ENCODE measurements at regions of chr1 and their contacts with region 1.

Region 1: DNA sequence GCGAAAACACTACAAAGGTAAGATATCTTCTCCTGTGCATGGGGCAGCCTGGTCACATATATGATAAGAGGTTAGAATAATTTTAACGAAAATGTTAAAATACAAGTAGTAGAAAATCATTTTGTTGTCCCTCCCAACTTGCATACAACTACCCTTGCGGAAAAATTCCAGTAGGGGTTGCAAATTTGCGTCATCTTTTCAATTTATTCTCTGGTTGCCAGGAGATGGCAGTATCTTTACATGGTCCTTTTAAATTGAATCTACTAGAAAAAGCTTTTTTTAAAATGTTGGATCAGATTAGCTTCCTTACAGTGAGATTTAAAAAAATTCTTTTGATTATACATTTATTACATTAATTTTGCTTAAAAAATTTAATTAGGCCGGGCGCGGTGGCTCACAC is 10.9 kb downstream of the S100PBP start:
- DNase-seq: peak; percentile 37
- H3K4me3 ChIP-seq: no peak overlapping the region
- H3K27ac ChIP-seq: no peak overlapping the region
- H3K4me1 ChIP-seq: no peaks in the 10 kb centered on the region
- H3K27me3 ChIP-seq: no peaks in the 10 kb centered on the region
- CTCF ChIP-seq: peak; percentile 52
- EP300 ChIP-seq: no peak
- RAD21 ChIP-seq: peak; percentile 57

Region 2: DNA sequence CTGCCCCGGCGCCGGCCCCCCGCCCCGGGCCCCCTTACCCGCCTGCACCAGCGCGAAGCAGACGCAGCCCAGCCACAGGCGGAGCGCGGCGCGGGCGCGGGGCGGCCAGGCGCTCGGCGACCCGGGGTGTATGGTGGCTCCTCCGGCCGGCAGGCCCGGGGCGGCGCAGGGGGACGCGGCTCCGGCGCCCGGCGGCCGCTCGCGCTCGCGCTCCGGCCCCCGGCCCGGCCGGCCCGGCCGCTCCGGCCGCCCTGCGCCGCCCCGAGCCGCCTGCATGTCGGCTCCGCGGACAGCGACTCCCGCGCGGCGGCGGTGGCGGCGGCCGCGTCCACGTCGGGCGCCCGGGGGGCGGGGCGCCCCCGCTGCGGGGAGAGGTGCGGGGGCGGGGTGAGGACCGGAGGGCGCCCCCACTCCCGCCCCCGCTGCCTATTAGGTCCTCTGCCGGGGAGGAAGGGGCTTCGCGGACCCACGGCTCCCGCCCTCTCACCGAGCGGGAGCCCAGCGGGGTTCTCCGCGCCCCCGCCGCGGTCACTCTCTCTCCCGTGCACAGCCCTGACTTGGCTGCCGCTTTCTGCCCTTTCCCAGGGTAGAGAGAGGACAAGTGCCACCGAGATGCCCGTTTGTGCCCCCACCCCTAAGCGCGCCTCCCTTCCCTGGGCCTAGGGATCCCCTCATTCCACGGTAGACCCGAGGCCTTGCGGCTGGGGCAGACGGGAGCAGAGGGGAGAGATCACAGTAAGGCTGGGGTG is 42.4 kb after region 1 on chr1 and contains the start of gene FNDC5:
- CTCF ChIA-PET with region 1: interaction called, 24 read pairs
- POLR2A ChIA-PET with region 1: no interaction called
- DNase-seq: peak; percentile 89
- H3K4me3 ChIP-seq: peak within 1 kb of the TSS in 1 of 2 experiments; percentile 46; a peak in 3 of 4 replicates
- H3K27ac ChIP-seq: no peak within 1 kb of the TSS
- H3K4me1 ChIP-seq: peaks cover 0 to 13% of the 10 kb centered on the region in 2 experiments; a peak in 1 of 4 replicates
- H3K27me3 ChIP-seq: no peaks in the 10 kb centered on the region
- CTCF ChIP-seq: no peak
- EP300 ChIP-seq: no peak
- RAD21 ChIP-seq: no peak
- polyA plus RNA-seq, gene FNDC5: 0.59 and 0.94 TPM in 2 replicates

Measured in SK-N-SH (cell line).